ENCODE measurements at regions of chr2 and their contacts with region 1.

Region 1: GRCh38 chr2:240513549-240514287 is 44.1 kb downstream of the ANKMY1 start:
- DNase-seq: peak; percentile 80
- H3K4me3 ChIP-seq: no peak overlapping the region
- H3K27ac ChIP-seq: no peak overlapping the region
- H3K4me1 ChIP-seq: peaks cover 16% of the 10 kb centered on the region
- H3K27me3 ChIP-seq: no peaks in the 10 kb centered on the region
- CTCF ChIP-seq: peak; percentile 94 to 97

Region 2: GRCh38 chr2:239882331-239882732 is 631.4 kb before region 1 on chr2:
- CTCF ChIA-PET with region 1: no interaction called
- dilution Hi-C with region 1: no loop called
- in situ Hi-C with region 1: no loop called
- intact Hi-C with region 1: no loop called
- DNase-seq: peak; percentile 31
- H3K4me3 ChIP-seq: no peak overlapping the region
- H3K27ac ChIP-seq: no peak overlapping the region
- H3K4me1 ChIP-seq: no peaks in the 10 kb centered on the region
- H3K27me3 ChIP-seq: no peaks in the 10 kb centered on the region
- CTCF ChIP-seq: peak; percentile 36 to 62

Region 3: DNA sequence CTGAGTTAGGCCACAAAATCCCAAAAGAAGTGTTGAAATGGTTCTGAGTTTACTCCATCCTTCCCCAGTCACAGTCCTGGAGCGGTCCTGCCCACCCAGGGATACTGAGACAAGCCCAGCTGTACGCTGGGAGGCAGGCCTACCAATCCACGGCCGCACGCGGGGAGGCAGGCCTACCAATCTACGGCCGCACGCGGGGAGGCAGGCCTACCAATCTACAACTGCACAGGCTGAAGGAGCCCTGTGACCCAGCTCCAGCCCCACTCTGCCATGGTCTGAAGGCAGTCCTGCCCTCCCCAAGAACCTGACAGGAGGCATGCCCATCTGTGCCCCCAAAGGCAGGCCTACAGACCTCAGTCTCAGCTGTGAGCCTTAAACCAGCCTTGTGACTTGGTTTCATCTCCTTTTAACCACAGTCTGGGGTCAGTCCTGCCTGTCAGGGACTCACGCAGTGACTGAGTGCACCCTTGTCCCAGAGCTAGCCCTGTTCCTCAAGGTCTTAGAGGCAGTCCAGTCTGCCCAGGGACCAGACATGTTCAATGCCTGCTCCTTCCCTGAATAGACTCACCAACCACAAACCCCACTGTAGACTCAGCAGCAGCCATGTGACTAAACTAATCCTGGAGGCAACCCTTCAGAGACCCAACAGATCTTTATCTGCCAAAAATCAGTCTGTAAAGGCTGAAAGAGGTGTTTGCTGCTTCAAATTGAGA is 41.5 kb before region 1 on chr2:
- CTCF ChIA-PET with region 1: no interaction called
- dilution Hi-C with region 1: loop called (anchors 5 kb)
- in situ Hi-C with region 1: no loop called
- intact Hi-C with region 1: no loop called
- DNase-seq: peak; percentile 47
- H3K4me3 ChIP-seq: no peak overlapping the region
- H3K27ac ChIP-seq: no peak overlapping the region
- H3K4me1 ChIP-seq: no peaks in the 10 kb centered on the region
- H3K27me3 ChIP-seq: no peaks in the 10 kb centered on the region
- CTCF ChIP-seq: no peak

Region 4: GRCh38 chr2:240586198-240586918 is 72.6 kb after region 1 on chr2 and contains the start of gene CAPN10:
- CTCF ChIA-PET with region 1: interaction called, 3 read pairs
- dilution Hi-C with region 1: no loop called
- in situ Hi-C with region 1: no loop called
- intact Hi-C with region 1: loop called (anchors 1 kb)
- DNase-seq: peak; percentile 95
- H3K4me3 ChIP-seq: peak within 1 kb of the TSS; percentile 63 to 86 (median 67)
- H3K27ac ChIP-seq: peak within 1 kb of the TSS; percentile 75
- H3K4me1 ChIP-seq: peaks cover 47% of the 10 kb centered on the region
- H3K27me3 ChIP-seq: no peaks in the 10 kb centered on the region
- CTCF ChIP-seq: no peak
- total RNA-seq, gene CAPN10: 16.0 to 27.7 TPM

Region 5: DNA sequence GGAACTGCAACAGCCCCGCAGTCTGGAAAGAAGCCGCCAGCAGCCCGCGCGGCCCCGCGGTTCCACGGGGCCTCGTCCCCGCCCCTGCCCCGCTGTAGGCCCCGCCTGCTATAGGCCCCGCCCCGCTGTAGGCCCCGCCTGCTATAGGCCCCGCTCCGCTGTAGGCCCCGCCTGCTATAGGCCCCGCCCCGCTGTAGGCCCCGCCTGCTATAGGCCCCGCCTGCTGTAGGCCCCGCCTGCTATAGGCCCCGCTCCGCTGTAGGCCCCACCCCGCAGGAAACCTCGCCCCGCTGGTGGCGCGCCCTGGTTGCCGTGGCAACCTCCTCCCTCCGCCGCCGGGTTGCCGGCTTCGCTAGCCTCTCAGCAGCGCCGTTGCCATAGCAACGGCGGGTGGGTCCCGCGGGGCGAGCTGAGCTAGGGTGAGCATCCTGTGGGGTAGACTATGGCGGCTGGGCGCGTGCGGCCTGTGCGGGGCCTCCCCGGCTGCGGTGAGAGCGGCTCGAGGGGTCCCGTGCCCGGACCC is 318.5 kb after region 1 on chr2:
- CTCF ChIA-PET with region 1: no interaction called
- dilution Hi-C with region 1: no loop called
- in situ Hi-C with region 1: loop called (anchors 25 kb)
- intact Hi-C with region 1: no loop called
- DNase-seq: peak; percentile 84
- H3K4me3 ChIP-seq: peak overlapping the region in 1 of 3 experiments; percentile 16
- H3K27ac ChIP-seq: no peak overlapping the region
- H3K4me1 ChIP-seq: peaks cover 6% of the 10 kb centered on the region
- H3K27me3 ChIP-seq: peaks cover 5% of the 10 kb centered on the region
- CTCF ChIP-seq: no peak